ENCODE measurements at regions of chr1 and their contacts with region 1.

Region 1: GRCh38 chr1:61056573-61057439 is 25.6 kb upstream of the NFIA start:
- DNase-seq: peak; percentile 81
- ATAC-seq: peak; percentile 69
- H3K4me3 ChIP-seq: peak overlapping the region; percentile 58 to 97
- H3K27ac ChIP-seq: peak overlapping the region; percentile 57 to 70
- H3K4me1 ChIP-seq: peaks cover 0 to 11% of the 10 kb centered on the region in 2 donors
- H3K27me3 ChIP-seq: no peaks in the 10 kb centered on the region

Region 2: DNA sequence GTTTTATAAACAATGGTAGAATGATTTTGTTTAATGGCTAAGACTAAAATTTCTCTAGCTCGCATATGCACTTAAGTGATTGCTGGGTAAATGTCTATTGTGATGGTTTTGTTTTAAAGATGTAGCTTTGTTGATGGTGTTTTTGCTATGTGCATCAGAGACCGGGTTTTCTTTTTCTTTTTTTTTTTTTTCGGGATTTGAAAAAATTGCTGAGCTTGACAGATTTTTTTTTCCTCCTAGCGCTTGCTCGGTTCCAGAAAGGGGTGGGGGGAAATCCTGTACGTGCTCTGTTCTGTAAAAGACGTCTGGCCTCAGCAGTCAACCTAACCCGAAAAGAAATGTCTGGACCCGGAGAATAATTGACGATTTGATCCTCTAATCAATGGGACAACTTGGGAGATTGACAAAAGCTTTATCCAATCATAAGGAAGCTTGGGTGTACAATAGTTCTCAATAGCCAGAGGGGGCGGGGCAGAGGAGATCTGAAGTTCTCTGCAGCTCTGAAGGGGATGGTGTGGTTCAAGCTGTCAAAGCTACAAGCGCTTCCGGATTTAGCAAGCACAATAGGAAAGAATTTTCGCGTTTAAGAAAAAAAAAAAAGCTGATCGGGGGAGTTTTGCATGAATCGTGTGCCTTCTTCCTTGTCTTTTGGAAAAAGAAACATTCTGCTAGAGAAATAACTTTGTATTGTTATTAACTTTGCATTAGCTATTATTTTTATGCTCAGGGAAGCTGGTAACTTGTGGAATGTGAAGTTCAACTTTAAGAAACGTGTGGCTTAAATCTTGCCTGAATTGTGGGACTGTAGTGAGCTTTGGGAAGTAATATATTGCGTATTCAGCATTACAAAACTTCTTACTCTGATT is 21.1 kb after region 1 on chr1:
- intact Hi-C with region 1: loop called in 1 of 2 experiments (anchors 2 kb)
- DNase-seq: peak; percentile 92 to 96
- ATAC-seq: peak; percentile 83
- H3K4me3 ChIP-seq: peak overlapping the region; percentile 46 to 58
- H3K27ac ChIP-seq: peak overlapping the region in 1 of 2 donors; percentile 33
- H3K4me1 ChIP-seq: no peaks in the 10 kb centered on the region
- H3K27me3 ChIP-seq: no peaks in the 10 kb centered on the region

Region 3: DNA sequence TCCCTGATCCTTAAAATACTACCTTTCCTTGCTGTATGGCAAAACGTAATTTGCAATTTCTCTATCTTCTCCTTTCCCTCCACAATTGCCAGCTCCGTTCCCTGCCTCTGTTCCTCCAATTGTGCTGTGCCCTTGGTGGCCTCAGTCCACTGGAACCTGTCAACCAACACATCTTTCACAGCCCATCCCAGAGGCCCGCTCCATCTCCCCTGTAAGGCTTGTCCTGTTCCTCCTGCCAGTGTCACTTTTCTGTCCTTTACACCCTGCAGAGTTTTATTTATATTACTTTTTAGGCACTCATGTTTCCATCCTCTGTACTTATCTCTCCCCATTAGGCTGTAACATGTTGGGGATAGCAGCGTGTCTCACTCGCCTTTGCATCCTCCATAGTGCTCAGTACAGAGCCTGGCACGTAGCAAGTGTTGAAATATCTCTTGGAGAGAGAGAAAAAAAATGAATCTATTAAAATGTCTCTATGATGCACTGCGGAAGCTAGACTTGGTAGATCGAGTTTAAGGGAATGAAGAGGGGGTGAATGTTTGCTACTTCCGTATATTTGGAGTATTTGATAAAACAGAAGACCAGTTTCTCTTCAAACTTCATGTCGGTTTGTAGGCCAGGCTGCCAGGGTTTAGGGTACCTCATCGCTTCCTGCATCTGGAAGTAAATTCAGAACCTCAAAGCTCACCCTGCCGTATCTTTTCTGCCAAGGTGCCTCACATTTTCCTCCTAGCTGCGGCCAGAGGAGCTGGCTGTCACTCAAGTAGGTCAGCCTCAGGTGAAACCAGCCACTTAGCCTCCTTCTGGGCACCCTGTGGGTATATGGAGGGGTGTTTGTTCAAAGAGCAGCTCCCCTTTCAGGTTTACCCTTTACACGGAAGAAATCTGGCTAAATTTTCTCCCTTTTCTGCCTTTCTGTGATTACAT is 364.4 kb after region 1 on chr1:
- intact Hi-C with region 1: no loop called
- DNase-seq: no peak
- ATAC-seq: no peak
- H3K4me3 ChIP-seq: no peak overlapping the region
- H3K27ac ChIP-seq: no peak overlapping the region
- H3K4me1 ChIP-seq: peaks cover 0 to 2% of the 10 kb centered on the region in 2 donors
- H3K27me3 ChIP-seq: no peaks in the 10 kb centered on the region

Measured in aorta (tissue), 5 donors.